IMR-90 (cell line): ENCODE measurements at regions of chr4 and their contacts with region 1.

Region 1: GRCh38 chr4:108834835-108835384 is 72.1 kb upstream of the ETNPPL start:
- DNase-seq: peak; percentile 74
- ATAC-seq: peak; percentile 84
- H3K4me3 ChIP-seq: no peak overlapping the region
- H3K27ac ChIP-seq: no peak overlapping the region
- H3K4me1 ChIP-seq: peaks cover 2% of the 10 kb centered on the region; the same call in 1 of the 2 replicates
- H3K27me3 ChIP-seq: peaks cover 2% of the 10 kb centered on the region; the same call in 1 of the 2 replicates
- CTCF ChIP-seq: peak; percentile 89
- POLR2A ChIP-seq: no peak
- RAD21 ChIP-seq: peak; percentile 95

Region 2: GRCh38 chr4:109243871-109244270 is 409.0 kb after region 1 on chr4:
- CTCF ChIA-PET with region 1: no interaction called
- POLR2A ChIA-PET with region 1: no interaction called
- dilution Hi-C with region 1: no loop called
- in situ Hi-C with region 1: no loop called
- intact Hi-C with region 1: loop called (anchors 5 kb)
- DNase-seq: no peak
- ATAC-seq: no peak
- H3K4me3 ChIP-seq: no peak overlapping the region
- H3K27ac ChIP-seq: no peak overlapping the region
- H3K4me1 ChIP-seq: no peaks in the 10 kb centered on the region
- H3K27me3 ChIP-seq: no peaks in the 10 kb centered on the region
- CTCF ChIP-seq: no peak
- POLR2A ChIP-seq: no peak
- RAD21 ChIP-seq: no peak

Region 3: GRCh38 chr4:109298279-109299010 is 463.5 kb after region 1 on chr4:
- CTCF ChIA-PET with region 1: no interaction called
- POLR2A ChIA-PET with region 1: no interaction called
- dilution Hi-C with region 1: no loop called
- in situ Hi-C with region 1: no loop called
- intact Hi-C with region 1: loop called (anchors 5 kb)
- DNase-seq: no peak
- ATAC-seq: no peak
- H3K4me3 ChIP-seq: no peak overlapping the region
- H3K27ac ChIP-seq: no peak overlapping the region
- H3K4me1 ChIP-seq: no peaks in the 10 kb centered on the region
- H3K27me3 ChIP-seq: peaks cover 28% of the 10 kb centered on the region
- CTCF ChIP-seq: peak; percentile 41
- POLR2A ChIP-seq: no peak
- RAD21 ChIP-seq: peak; percentile 37; the same call in 1 of the 2 replicates

Region 4: DNA sequence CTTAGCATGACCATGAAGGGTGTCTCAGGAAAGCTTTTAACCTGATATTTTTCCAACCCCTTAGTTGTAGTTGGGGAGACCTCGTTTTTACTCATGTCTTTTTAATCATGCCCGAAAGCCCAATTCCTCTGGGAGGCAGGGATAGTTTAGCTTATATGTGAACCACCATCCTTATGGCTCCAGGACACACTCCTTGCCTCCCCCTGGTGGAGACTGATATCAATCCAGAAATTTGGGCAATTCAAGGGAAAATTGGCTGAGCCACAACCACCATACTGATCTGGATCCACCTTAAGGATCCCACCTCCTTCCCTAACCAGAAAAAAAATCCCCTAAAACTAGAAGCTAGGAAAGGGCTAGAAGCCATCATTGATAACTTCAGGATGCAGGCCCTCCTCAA is 480.9 kb after region 1 on chr4:
- CTCF ChIA-PET with region 1: interaction called, 7 read pairs
- POLR2A ChIA-PET with region 1: no interaction called
- dilution Hi-C with region 1: no loop called
- in situ Hi-C with region 1: no loop called
- intact Hi-C with region 1: loop called (anchors 1 kb)
- DNase-seq: peak; percentile 15
- ATAC-seq: 0 out of 2 replicates have a peak, but pooled peaks have one; percentile 46
- H3K4me3 ChIP-seq: no peak overlapping the region
- H3K27ac ChIP-seq: no peak overlapping the region
- H3K4me1 ChIP-seq: no peaks in the 10 kb centered on the region
- H3K27me3 ChIP-seq: no peaks in the 10 kb centered on the region
- CTCF ChIP-seq: peak; percentile 50
- POLR2A ChIP-seq: no peak
- RAD21 ChIP-seq: peak; percentile 37

Region 5: GRCh38 chr4:109332926-109333464 is 498.1 kb after region 1 on chr4:
- CTCF ChIA-PET with region 1: interaction called, 3 read pairs
- POLR2A ChIA-PET with region 1: no interaction called
- dilution Hi-C with region 1: no loop called
- in situ Hi-C with region 1: no loop called
- intact Hi-C with region 1: loop called (anchors 1 kb)
- DNase-seq: no peak
- ATAC-seq: no peak
- H3K4me3 ChIP-seq: no peak overlapping the region
- H3K27ac ChIP-seq: no peak overlapping the region
- H3K4me1 ChIP-seq: no peaks in the 10 kb centered on the region
- H3K27me3 ChIP-seq: no peaks in the 10 kb centered on the region
- CTCF ChIP-seq: peak; percentile 26; the same call in 1 of the 2 replicates
- POLR2A ChIP-seq: no peak
- RAD21 ChIP-seq: peak; percentile 44

Region 6: GRCh38 chr4:109406338-109406931 is 571.5 kb after region 1 on chr4:
- CTCF ChIA-PET with region 1: interaction called, 8 read pairs
- POLR2A ChIA-PET with region 1: no interaction called
- dilution Hi-C with region 1: no loop called
- in situ Hi-C with region 1: loop called (anchors 5 kb)
- intact Hi-C with region 1: loop called (anchors 1 kb)
- DNase-seq: peak; percentile 71
- ATAC-seq: peak; percentile 78
- H3K4me3 ChIP-seq: no peak overlapping the region
- H3K27ac ChIP-seq: no peak overlapping the region
- H3K4me1 ChIP-seq: no peaks in the 10 kb centered on the region
- H3K27me3 ChIP-seq: 0 out of 2 replicates have a peak, but pooled peaks cover under 1% of the 10 kb centered on the region
- CTCF ChIP-seq: peak; percentile 77
- POLR2A ChIP-seq: no peak
- RAD21 ChIP-seq: peak; percentile 80